Posterior vena cava (tissue), 2 donors: ENCODE measurements at regions of chr1 and their contacts with region 1.

Region 1: DNA sequence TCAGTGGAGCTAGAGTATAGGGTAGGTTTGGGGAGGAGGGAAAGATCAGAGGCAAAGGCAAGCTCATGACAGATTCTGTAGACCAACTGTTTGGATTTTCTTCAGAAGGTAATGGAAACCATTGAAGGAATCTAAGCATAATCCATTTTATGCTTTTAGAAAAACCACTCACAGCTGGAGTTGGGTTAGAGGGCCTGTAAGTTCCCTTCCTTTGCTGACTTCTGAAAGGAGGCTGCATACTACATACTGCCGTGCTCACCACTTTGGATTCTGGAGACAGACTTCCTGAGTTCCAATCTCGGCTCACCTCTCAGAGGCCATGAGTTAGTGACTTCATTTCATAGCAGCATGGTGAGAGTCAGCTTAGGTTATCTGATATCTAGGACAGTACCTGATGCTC is 6.4 kb upstream of the SYT2 start:
- DNase-seq: no peak

Region 2: DNA sequence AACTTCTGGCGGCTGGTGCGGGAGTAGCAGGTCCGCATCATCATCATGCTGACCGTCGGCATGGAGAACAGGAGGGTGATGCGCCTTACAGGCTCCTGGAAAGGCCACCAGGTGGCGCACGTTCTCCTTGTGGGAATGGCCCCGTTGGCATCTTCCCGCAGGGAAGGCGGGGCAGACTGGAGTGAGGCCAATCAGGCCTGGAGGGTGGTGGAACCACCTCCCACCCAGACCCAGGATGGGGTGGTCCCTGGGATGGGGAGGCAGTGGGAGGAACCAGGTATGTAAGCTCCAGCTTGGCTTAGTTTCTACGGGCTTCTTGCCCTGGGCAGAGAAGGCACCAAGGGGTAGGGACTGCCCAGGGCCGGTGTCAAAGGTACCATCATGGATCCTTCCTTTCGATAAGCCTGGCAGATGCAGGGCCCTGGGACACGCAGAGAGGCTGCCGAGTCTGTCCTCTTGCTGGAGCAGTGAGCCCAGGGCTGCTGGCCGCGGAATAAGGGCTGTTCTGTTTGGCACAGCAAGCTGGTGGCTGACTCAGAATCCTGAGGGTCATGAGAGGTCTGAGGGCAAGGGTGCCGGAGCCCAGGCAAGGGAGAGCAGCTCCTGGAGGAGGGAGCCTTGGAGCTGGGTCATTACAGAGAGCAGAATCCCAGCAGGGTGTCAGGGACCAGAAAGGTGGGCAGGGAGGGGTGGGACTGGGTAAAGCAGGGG is 531.7 kb before region 1 on chr1:
- intact Hi-C with region 1: loop called (anchors 5 to 10 kb)
- DNase-seq: peak; percentile 93